ENCODE measurements at regions of chr12 and their contacts with region 1.

Region 1: GRCh38 chr12:67364228-67364627 is 95.1 kb downstream of the CAND1 start:
- DNase-seq: no peak
- ATAC-seq: no peak
- H3K4me3 ChIP-seq: no peak overlapping the region
- H3K27ac ChIP-seq: no peak overlapping the region
- H3K4me1 ChIP-seq: no peaks in the 10 kb centered on the region
- H3K27me3 ChIP-seq: no peaks in the 10 kb centered on the region
- CTCF ChIP-seq: no peak

Region 2: DNA sequence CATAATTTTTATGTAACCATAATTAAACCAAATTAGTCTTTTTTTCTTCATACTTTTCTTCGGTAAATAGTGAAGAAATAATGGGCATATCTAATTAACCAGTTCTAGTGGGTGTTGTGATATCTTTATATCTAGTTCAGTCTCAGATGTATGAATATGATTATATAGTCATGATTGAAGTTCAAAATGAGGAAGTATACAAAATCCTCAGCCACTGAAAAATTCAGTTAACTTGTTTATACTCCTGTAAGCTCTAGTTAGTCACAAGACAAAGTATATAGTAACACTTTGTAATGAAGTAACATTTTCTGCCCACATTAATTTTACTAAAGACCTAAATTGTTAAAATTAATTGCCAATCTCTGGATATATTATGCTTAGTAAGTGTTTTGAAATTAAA is 48.6 kb before region 1 on chr12:
- intact Hi-C with region 1: no loop called
- DNase-seq: no peak
- ATAC-seq: no peak
- H3K4me3 ChIP-seq: no peak overlapping the region
- H3K27ac ChIP-seq: no peak overlapping the region
- H3K4me1 ChIP-seq: peaks cover 0 to 6% of the 10 kb centered on the region in 2 donors
- H3K27me3 ChIP-seq: no peaks in the 10 kb centered on the region
- CTCF ChIP-seq: no peak

Region 3: DNA sequence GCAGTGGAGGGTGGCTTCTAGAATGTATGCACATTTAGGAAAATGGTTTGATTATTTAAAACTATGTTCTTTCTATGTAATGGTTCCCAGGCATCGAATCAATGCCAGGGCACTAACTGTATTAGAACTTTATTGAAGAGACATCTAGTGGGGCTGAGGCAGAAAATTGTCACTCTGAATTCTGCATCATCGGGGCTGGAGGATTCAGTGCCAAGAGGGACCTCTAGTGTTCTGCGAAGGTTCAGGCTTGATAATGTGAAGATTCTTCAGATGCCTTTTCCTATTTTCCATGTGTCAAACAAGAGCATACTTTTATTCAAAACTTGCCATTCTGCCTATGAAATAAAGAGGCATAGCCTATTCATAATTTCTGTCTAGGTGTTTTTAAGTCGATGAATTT is 51.2 kb after region 1 on chr12:
- intact Hi-C with region 1: loop called in 1 of 2 experiments (anchors 10 kb)
- DNase-seq: peak in 1 of 4 donors; percentile 50
- ATAC-seq: peak; percentile 54
- H3K4me3 ChIP-seq: no peak overlapping the region
- H3K27ac ChIP-seq: no peak overlapping the region
- H3K4me1 ChIP-seq: no peaks in the 10 kb centered on the region
- H3K27me3 ChIP-seq: no peaks in the 10 kb centered on the region
- CTCF ChIP-seq: peak in 1 of 2 donors; percentile 36